ENCODE measurements at regions of chr3 and their contacts with region 1.

Region 1: GRCh38 chr3:161349529-161350278 is 21.6 kb downstream of the SPTSSB start:
- DNase-seq: peak; percentile 93
- ATAC-seq: peak; percentile 78
- H3K4me3 ChIP-seq: no peak overlapping the region
- H3K27ac ChIP-seq: peak overlapping the region; percentile 73
- H3K4me1 ChIP-seq: peaks cover 46% of the 10 kb centered on the region
- H3K27me3 ChIP-seq: no peaks in the 10 kb centered on the region
- CTCF ChIP-seq: no peak

Region 2: DNA sequence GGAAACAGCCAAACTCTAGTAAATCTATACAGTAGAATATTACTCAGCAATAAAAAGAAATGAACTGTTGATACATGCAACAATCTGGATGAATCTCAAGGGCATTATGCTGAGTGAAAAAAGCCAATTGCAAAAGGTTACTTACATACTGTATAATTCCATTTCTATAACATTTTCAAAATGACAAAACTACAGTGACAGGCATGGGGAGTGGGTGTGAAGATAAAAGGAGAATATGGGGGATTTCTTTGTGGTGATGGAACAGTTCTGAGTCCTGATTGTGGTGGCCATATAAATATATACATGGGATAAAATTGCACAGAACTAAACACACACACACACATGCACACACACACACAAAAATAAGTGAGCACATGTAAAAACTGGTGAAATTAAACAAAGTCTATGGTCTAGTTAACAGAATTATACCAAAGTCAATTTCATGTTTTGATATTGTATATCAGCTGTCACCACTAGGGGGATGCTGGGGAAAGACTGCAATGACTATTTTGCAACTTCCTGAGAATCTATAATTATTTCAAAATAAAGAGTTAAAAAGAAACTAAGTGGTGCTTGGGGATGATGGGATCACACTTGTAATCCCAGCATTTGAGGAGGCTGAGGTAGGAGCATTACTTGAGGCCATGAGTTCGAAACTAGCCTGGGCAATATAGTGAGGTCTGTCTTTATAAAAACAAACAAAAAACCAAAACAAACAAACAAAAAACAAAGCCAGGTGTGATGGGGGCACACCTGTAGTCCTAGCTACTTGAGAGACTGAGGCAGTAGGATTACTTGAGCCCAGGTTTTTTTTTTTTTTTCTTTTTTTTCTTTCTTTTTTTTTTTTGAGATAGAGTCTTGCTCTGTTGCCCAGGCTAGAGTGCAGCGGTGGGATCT is 44.4 kb before region 1 on chr3:
- CTCF ChIA-PET with region 1: no interaction called
- POLR2A ChIA-PET with region 1: no interaction called
- intact Hi-C with region 1: loop called (anchors 5 kb)
- DNase-seq: peak; percentile 64
- ATAC-seq: peak; percentile 46; the same call in 1 of the 2 replicates
- H3K4me3 ChIP-seq: no peak overlapping the region
- H3K27ac ChIP-seq: no peak overlapping the region
- H3K4me1 ChIP-seq: no peaks in the 10 kb centered on the region
- H3K27me3 ChIP-seq: no peaks in the 10 kb centered on the region
- CTCF ChIP-seq: peak; percentile 89

Region 3: GRCh38 chr3:161323926-161324621 is 25.6 kb before region 1 on chr3:
- CTCF ChIA-PET with region 1: no interaction called
- POLR2A ChIA-PET with region 1: no interaction called
- intact Hi-C with region 1: loop called (anchors 1 kb)
- DNase-seq: peak; percentile 78
- ATAC-seq: peak; percentile 81
- H3K4me3 ChIP-seq: peak overlapping the region; percentile 1; the same call in 1 of the 2 replicates
- H3K27ac ChIP-seq: peak overlapping the region; percentile 91
- H3K4me1 ChIP-seq: peaks cover 32% of the 10 kb centered on the region
- H3K27me3 ChIP-seq: no peaks in the 10 kb centered on the region
- CTCF ChIP-seq: no peak

Measured in PC-3 (cell line).